Naive thymus-derived CD4-positive, alpha-beta T cell (primary cell): ENCODE measurements at regions of chr12 and their contacts with region 1.

Region 1: DNA sequence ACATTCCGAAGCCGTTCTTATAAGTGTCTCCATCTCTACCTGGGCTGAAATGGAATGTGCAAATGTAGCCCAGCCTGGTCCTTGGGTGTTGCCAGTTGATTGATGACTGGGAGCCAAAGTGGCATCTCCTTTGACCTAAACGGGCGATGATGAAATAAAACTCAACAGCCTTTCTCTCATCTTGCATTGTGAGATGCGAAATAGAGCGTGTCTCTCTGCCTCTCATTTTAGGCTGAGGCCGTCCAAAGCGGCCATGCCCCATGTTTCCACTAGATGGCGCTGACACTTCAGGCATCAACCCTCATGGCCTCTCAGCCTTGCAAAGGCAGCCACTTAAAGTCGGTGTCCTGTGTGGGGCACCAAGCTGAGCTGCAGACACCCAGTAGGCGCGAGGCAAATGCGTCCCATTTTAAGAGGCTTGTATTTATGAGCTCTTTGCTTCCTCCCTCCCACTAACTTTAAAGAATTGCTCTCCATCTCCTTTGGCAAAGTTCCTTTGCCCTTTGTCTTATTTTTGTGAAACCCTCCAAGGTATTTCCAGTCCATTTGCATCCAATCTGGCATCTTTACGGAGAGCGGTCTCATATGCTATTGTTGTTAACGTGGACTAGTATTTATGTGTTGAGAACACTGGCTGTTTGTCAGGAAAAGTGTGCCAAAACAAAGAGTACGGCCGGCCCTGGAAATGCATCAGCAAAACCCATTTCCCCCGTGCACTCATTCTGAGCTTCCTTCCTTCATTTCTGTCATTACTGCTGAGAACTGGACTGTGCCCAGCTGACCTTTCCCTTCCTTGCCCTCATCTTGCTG is 25.0 kb downstream of the GPRC5A start:
- DNase-seq: peak; percentile 72 to 87 (median 81)
- ATAC-seq: peak; percentile 99
- H3K4me3 ChIP-seq: no peak overlapping the region
- H3K4me3 Mint-ChIP-seq: peak overlapping the region in 7 of 10 donors; percentile 2 to 63 (median 40)
- H3K27ac ChIP-seq: no peak overlapping the region
- H3K27ac Mint-ChIP-seq: peak overlapping the region in 4 of 9 donors; percentile 6 to 55 (median 12)
- H3K4me1 ChIP-seq: peaks cover 0 to 3% of the 10 kb centered on the region in 2 donors
- H3K4me1 Mint-ChIP-seq: peaks cover 9 to 17% (median 11%) of the 10 kb centered on the region in 7 donors
- H3K27me3 ChIP-seq: no peaks in the 10 kb centered on the region
- H3K27me3 Mint-ChIP-seq: peaks cover 0 to 30% (median 10%) of the 10 kb centered on the region in 5 donors

Region 2: GRCh38 chr12:12837025-12837872 is 79.1 kb before region 1 on chr12:
- CTCF ChIA-PET with region 1: interaction called, 8 read pairs
- POLR2A ChIA-PET with region 1: no interaction called
- intact Hi-C with region 1: loop called in 1 of 2 experiments (anchors 1 kb)
- DNase-seq: peak in 8 of 9 donors; percentile 34 to 68 (median 52)
- ATAC-seq: peak; percentile 80
- H3K4me3 ChIP-seq: no peak overlapping the region
- H3K4me3 Mint-ChIP-seq: peak overlapping the region; percentile 15 to 74 (median 35)
- H3K27ac ChIP-seq: no peak overlapping the region
- H3K27ac Mint-ChIP-seq: peak overlapping the region; percentile 40 to 95 (median 85)
- H3K4me1 ChIP-seq: peaks cover 0 to 26% of the 10 kb centered on the region in 2 donors
- H3K4me1 Mint-ChIP-seq: peaks cover 11 to 37% (median 34%) of the 10 kb centered on the region in 7 donors
- H3K27me3 ChIP-seq: no peaks in the 10 kb centered on the region
- H3K27me3 Mint-ChIP-seq: no peaks in the 10 kb centered on the region

Region 3: DNA sequence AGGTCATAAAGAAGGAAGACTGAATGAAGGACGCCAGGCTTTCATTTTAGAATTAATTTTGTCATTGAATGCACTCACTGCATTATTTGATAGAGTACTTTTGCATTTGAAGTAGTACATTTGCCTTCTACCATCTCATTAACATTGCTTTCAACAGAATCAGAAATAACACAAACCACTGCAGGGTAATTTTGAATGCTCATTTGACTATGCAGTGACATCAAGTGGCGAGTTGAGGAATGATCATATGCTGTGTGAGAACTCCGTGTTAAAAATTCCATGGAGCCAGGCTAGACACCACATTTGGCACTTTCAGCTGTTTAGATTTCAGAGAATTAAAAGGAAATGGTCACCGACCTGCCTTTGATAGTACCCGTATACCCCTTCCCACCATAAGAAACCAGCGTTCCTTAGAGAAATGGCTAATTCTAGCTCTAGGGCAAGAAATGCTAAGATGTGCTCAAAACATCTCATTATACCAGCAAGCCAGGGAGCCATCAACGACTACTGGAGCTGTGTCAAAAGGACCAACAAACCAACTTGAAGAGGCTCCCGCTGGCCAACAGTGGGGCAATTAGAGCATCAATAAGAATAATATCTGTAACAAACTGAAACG is 67.2 kb after region 1 on chr12:
- CTCF ChIA-PET with region 1: interaction called, 5 read pairs
- POLR2A ChIA-PET with region 1: no interaction called
- intact Hi-C with region 1: loop called (anchors 1 kb)
- DNase-seq: peak in 5 of 9 donors; percentile 4 to 43 (median 19)
- ATAC-seq: peak; percentile 57
- H3K4me3 ChIP-seq: no peak overlapping the region
- H3K4me3 Mint-ChIP-seq: no peak overlapping the region
- H3K27ac ChIP-seq: no peak overlapping the region
- H3K27ac Mint-ChIP-seq: no peak overlapping the region
- H3K4me1 ChIP-seq: no peaks in the 10 kb centered on the region
- H3K4me1 Mint-ChIP-seq: no peaks in the 10 kb centered on the region
- H3K27me3 ChIP-seq: no peaks in the 10 kb centered on the region
- H3K27me3 Mint-ChIP-seq: no peaks in the 10 kb centered on the region

Region 4: GRCh38 chr12:13094347-13094746 is 178.0 kb after region 1 on chr12:
- CTCF ChIA-PET with region 1: no interaction called
- POLR2A ChIA-PET with region 1: no interaction called
- intact Hi-C with region 1: loop called (anchors 1 kb)
- DNase-seq: no peak
- ATAC-seq: no peak
- H3K4me3 ChIP-seq: no peak overlapping the region
- H3K4me3 Mint-ChIP-seq: no peak overlapping the region
- H3K27ac ChIP-seq: no peak overlapping the region
- H3K27ac Mint-ChIP-seq: no peak overlapping the region
- H3K4me1 ChIP-seq: peaks cover 0 to 14% of the 10 kb centered on the region in 2 donors
- H3K4me1 Mint-ChIP-seq: peaks cover 12 to 19% (median 18%) of the 10 kb centered on the region in 7 donors
- H3K27me3 ChIP-seq: no peaks in the 10 kb centered on the region
- H3K27me3 Mint-ChIP-seq: peaks cover 0 to 7% (median 0%) of the 10 kb centered on the region in 5 donors

Region 5: DNA sequence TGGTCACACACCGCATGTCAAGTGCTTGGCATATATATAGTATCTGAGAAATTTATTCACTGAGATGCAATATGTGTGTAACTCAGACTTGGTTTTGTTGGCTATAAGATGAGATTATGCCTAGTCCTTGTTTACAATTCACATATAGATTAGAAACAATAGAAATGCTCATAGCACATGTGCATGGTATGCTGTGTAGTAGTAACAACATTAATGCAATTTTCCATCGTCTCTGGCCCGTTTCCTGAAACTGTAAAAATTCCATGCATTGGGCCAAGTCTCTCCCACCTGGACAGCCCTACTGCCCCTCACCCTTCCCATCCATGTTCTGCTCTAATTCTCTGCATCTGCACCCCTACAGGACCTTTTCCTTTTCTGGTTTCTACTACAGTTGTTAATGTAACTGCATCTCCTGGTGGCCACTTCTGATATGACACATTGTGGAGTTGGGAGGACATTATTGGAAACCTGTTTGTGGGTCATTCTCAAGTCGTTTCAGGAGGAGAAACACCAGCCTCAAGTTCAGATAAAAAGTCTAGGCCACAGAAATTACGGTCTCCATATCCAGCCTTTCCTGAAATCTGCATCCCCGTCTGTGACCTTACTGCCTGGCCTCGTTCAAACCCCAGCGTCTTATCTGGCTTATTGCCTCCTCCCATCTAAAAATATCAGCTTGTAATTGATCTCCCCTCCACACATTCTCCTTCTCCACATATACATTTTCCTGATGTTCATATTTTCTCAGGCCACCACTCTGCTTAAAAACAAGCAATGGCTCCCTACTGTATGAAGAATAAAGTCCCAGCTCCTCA is 317.7 kb after region 1 on chr12:
- CTCF ChIA-PET with region 1: no interaction called
- POLR2A ChIA-PET with region 1: no interaction called
- intact Hi-C with region 1: loop called (anchors 1 kb)
- DNase-seq: peak in 6 of 9 donors; percentile 3 to 34 (median 22)
- ATAC-seq: peak; percentile 62
- H3K4me3 ChIP-seq: no peak overlapping the region
- H3K4me3 Mint-ChIP-seq: no peak overlapping the region
- H3K27ac ChIP-seq: no peak overlapping the region
- H3K27ac Mint-ChIP-seq: no peak overlapping the region
- H3K4me1 ChIP-seq: no peaks in the 10 kb centered on the region
- H3K4me1 Mint-ChIP-seq: no peaks in the 10 kb centered on the region
- H3K27me3 ChIP-seq: no peaks in the 10 kb centered on the region
- H3K27me3 Mint-ChIP-seq: peaks cover 0 to 16% (median 8%) of the 10 kb centered on the region in 5 donors